Mucosa of descending colon (tissue), 3 donors: ENCODE measurements at regions of chr13 and their contacts with region 1.

Region 1: GRCh38 chr13:48580185-48580803 is 47.4 kb upstream of the RCBTB2 start:
- DNase-seq: peak in 2 of 3 donors; percentile 39 to 97
- ATAC-seq: peak; percentile 74
- H3K4me3 ChIP-seq: no peak overlapping the region
- H3K4me1 ChIP-seq: peaks cover 28% of the 10 kb centered on the region
- CTCF ChIP-seq: peak; percentile 65

Region 2: GRCh38 chr13:48126944-48127830 is 453.1 kb before region 1 on chr13:
- intact Hi-C with region 1: loop called (anchors 5 to 10 kb)
- DNase-seq: peak in 1 of 3 donors; percentile 47
- ATAC-seq: peak; percentile 88
- H3K4me3 ChIP-seq: no peak overlapping the region
- H3K4me1 ChIP-seq: no peaks in the 10 kb centered on the region
- CTCF ChIP-seq: peak; percentile 55

Region 3: GRCh38 chr13:48334534-48335127 is 245.7 kb before region 1 on chr13:
- intact Hi-C with region 1: loop called (anchors 10 kb)
- DNase-seq: peak in 1 of 3 donors; percentile 22
- ATAC-seq: peak; percentile 49
- H3K4me3 ChIP-seq: no peak overlapping the region
- H3K4me1 ChIP-seq: no peaks in the 10 kb centered on the region
- CTCF ChIP-seq: no peak

Region 4: DNA sequence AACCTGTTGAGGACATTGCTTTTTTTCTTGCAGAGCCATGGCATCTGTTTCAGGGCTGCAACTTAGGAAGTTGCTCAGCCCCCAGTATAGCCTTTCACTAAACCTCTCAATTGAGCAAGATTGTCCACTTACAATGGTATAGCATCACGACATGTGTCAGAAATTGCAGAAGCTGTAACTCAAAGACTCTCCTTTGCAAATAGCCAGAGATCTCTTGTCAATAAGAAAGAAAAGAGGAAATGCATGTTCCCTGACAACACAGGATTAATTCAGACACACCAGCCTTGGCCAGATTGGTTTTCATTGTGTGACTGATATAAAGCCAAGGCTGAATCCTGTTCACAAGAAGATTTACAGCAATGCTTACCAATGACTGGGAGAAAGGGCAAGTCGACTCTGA is 34.8 kb after region 1 on chr13:
- intact Hi-C with region 1: no loop called
- DNase-seq: no peak
- ATAC-seq: no peak
- H3K4me3 ChIP-seq: no peak overlapping the region
- H3K4me1 ChIP-seq: no peaks in the 10 kb centered on the region
- CTCF ChIP-seq: no peak